Activated CD4-positive, alpha-beta T cell treated with anti-CD3 and anti-CD28 coated beads, Interleukin-2, amount 10 ng/mL, durations not matched to agents 24 days and 14 days (primary cell): ENCODE measurements at regions of chr19 and their contacts with region 1.

Region 1: DNA sequence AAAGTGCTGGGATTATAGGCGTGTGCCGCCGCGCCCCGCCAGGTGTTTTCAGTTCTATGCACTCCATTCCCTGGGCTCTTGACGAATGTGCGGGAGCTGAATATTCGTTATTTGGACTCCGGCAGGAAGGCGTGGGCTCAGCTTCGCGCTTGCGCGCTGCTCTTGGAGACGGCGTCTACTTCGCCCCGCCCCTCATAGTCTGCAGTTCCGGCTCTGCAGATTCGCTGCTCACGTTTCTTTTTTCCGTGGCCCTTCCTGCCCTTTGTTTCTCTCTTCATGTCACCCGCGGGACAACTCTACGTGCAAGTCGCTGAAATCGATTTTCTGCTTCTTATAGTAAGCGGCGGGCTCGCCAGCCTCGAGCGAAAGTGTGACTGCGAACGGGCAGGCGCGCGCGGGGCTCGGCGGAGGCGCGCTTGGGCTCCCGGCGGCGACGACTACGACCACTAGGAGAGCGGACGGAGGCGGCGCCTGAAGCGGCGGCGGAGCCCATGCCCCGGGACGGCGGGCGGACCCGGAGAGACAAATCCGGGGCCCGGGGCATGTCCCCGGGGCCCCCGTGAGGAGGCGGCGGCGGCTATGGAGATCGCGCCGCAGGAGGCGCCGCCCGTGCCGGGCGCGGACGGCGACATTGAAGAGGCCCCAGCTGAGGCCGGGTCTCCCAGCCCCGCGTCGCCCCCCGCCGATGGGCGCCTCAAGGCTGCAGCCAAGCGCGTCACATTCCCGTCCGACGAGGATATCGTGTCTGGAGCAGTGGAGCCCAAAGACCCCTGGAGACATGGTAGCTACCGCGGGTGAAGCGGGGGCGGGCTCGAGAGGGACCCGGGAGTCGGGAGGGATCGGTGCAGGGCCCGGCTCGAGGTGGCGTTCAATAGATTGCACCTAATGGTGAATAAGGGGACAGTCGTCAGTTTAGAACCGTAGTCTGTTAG is at the start of gene PPP1R37:
- DNase-seq: peak; percentile 98
- H3K4me3 Mint-ChIP-seq: peak within 1 kb of the TSS; percentile 92
- H3K27ac Mint-ChIP-seq: peak within 1 kb of the TSS; percentile 94
- H3K4me1 Mint-ChIP-seq: peaks cover 41% of the 10 kb centered on the region
- H3K27me3 Mint-ChIP-seq: no peaks in the 10 kb centered on the region
- total RNA-seq, gene PPP1R37: 20.3 and 21.8 TPM in 2 replicates

Region 2: DNA sequence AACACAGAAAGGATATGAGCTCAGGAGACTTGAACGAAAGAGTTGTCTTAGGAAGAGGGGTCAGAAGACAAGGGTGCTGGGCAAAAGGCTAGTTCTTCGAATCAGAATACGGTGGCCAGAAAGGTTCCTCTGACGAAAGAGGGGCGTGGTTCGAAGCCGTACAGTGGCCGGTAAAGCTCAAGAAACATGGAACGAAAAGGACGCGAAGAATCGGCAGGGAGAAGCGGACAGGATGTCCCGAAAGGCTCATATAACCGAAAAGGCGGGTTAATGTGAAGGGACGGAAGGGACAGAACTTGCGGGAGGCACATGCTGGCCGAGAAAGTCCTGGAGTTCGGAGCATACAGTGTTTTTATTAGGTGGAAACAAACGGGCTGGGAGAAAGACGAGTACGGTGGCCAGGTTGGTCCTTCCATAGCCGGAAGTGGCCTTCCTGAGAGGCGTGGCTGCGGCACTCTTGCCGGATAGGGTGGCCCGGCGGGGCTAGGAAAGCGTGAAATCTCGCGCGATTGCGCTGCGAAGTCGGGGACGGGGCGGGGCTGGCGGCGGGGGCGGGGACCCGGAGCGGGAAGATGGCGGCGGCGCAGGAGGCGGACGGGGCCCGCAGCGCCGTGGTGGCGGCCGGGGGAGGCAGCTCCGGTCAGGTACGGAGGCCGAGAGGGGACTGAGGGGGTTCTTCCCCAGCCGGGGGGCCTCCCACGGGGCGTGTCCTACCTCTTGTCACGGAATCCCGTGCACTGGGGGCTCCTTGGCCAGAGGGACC is 138.0 kb before region 1 on chr19 and contains the start of gene CLPTM1:
- intact Hi-C with region 1: loop called (anchors 1 kb)
- DNase-seq: peak; percentile 98
- H3K4me3 Mint-ChIP-seq: peak within 1 kb of the TSS; percentile 95
- H3K27ac Mint-ChIP-seq: peak within 1 kb of the TSS; percentile 94
- H3K4me1 Mint-ChIP-seq: peaks cover 36% of the 10 kb centered on the region
- H3K27me3 Mint-ChIP-seq: no peaks in the 10 kb centered on the region
- total RNA-seq, gene CLPTM1: 71.7 and 76.6 TPM in 2 replicates

Region 3: GRCh38 chr19:45059278-45059965 is 33.6 kb before region 1 on chr19:
- intact Hi-C with region 1: no loop called
- DNase-seq: peak; percentile 95
- H3K4me3 Mint-ChIP-seq: no peak overlapping the region
- H3K27ac Mint-ChIP-seq: no peak overlapping the region
- H3K4me1 Mint-ChIP-seq: peaks cover 4% of the 10 kb centered on the region
- H3K27me3 Mint-ChIP-seq: no peaks in the 10 kb centered on the region

Region 4: GRCh38 chr19:45079063-45079910 is 13.7 kb before region 1 on chr19 and contains the start of gene GEMIN7:
- intact Hi-C with region 1: loop called (anchors 1 kb)
- DNase-seq: peak; percentile 95
- H3K4me3 Mint-ChIP-seq: peak within 1 kb of the TSS; percentile 100
- H3K27ac Mint-ChIP-seq: peak within 1 kb of the TSS; percentile 94
- H3K4me1 Mint-ChIP-seq: peaks cover 31% of the 10 kb centered on the region
- H3K27me3 Mint-ChIP-seq: no peaks in the 10 kb centered on the region
- total RNA-seq, gene GEMIN7: 51.5 and 54.3 TPM in 2 replicates

Region 5: GRCh38 chr19:45117669-45118068 is 24.7 kb after region 1 on chr19:
- intact Hi-C with region 1: no loop called
- DNase-seq: no peak
- H3K4me3 Mint-ChIP-seq: no peak overlapping the region
- H3K27ac Mint-ChIP-seq: peak overlapping the region; percentile 58
- H3K4me1 Mint-ChIP-seq: peaks cover 49% of the 10 kb centered on the region
- H3K27me3 Mint-ChIP-seq: no peaks in the 10 kb centered on the region

Region 6: GRCh38 chr19:45178262-45179071 is 85.5 kb after region 1 on chr19 and contains the start of gene BLOC1S3:
- intact Hi-C with region 1: loop called (anchors 1 kb)
- DNase-seq: peak; percentile 100
- H3K4me3 Mint-ChIP-seq: peak within 1 kb of the TSS; percentile 88
- H3K27ac Mint-ChIP-seq: peak within 1 kb of the TSS; percentile 93
- H3K4me1 Mint-ChIP-seq: peaks cover 20% of the 10 kb centered on the region
- H3K27me3 Mint-ChIP-seq: no peaks in the 10 kb centered on the region
- total RNA-seq, gene BLOC1S3: 10.1 and 12.2 TPM in 2 replicates

Region 7: GRCh38 chr19:45405435-45406225 is 312.6 kb after region 1 on chr19:
- intact Hi-C with region 1: loop called (anchors 2 kb)
- DNase-seq: peak; percentile 95
- H3K4me3 Mint-ChIP-seq: peak overlapping the region; percentile 97
- H3K27ac Mint-ChIP-seq: peak overlapping the region; percentile 89
- H3K4me1 Mint-ChIP-seq: peaks cover 36% of the 10 kb centered on the region
- H3K27me3 Mint-ChIP-seq: peaks cover 12% of the 10 kb centered on the region

Region 8: GRCh38 chr19:45607071-45608029 is 514.3 kb after region 1 on chr19:
- intact Hi-C with region 1: no loop called
- DNase-seq: peak; percentile 84
- H3K4me3 Mint-ChIP-seq: peak overlapping the region; percentile 34
- H3K27ac Mint-ChIP-seq: peak overlapping the region; percentile 87
- H3K4me1 Mint-ChIP-seq: peaks cover 7% of the 10 kb centered on the region
- H3K27me3 Mint-ChIP-seq: peaks cover 11% of the 10 kb centered on the region